ENCODE measurements at regions of chr9 and their contacts with region 1.

Region 1: DNA sequence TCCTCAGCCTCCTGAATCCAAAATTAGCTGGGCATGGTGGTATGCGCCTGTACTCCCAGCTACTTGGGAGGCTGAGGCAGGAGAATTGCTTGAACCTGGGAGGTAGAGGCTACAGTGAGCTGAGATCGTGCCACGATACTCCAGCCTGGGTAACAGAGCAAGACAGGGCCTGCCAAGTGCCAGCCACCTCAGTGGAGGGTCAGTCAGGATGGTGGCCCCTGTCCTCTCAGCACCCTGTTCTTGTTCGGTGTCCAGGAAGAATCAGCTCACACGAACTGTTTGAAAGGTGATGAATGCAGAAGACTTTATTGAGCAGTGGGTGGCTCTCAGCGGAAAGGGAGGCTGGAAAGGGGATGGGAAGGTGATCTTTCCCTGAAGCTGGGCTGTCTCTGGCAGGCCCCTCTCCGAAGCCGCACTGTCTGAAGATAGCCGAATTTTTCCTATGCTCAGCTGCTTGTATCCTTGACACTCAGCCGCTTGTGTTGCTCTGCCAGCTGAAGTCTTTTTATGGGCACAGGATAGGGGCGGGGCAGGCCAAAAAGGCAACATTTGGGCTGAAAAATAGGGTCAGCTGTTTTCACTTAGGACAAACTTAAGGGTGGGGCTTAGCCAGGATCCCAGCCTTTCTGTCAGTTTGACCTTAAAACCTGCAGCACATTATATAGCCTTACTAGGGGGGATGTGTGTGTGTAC is 50.9 kb downstream of the UBE2R2 start:
- DNase-seq: no peak
- ATAC-seq: peak; percentile 42
- H3K4me3 ChIP-seq: no peak overlapping the region
- H3K27ac ChIP-seq: no peak overlapping the region
- H3K4me1 ChIP-seq: peaks cover 12% of the 10 kb centered on the region
- H3K27me3 ChIP-seq: no peaks in the 10 kb centered on the region
- CTCF ChIP-seq: no peak

Region 2: GRCh38 chr9:33884856-33885701 is 17.2 kb after region 1 on chr9:
- CTCF ChIA-PET with region 1: interaction called, 10 read pairs
- POLR2A ChIA-PET with region 1: no interaction called
- in situ Hi-C with region 1: no loop called
- intact Hi-C with region 1: no loop called
- DNase-seq: no peak
- ATAC-seq: no peak; the same call in 1 of the 2 replicates
- H3K4me3 ChIP-seq: no peak overlapping the region
- H3K27ac ChIP-seq: no peak overlapping the region
- H3K4me1 ChIP-seq: peaks cover 22% of the 10 kb centered on the region
- H3K27me3 ChIP-seq: no peaks in the 10 kb centered on the region
- CTCF ChIP-seq: no peak

Region 3: GRCh38 chr9:33924978-33925797 is 57.3 kb after region 1 on chr9:
- CTCF ChIA-PET with region 1: no interaction called
- POLR2A ChIA-PET with region 1: no interaction called
- in situ Hi-C with region 1: no loop called
- intact Hi-C with region 1: loop called (anchors 10 kb)
- DNase-seq: no peak
- ATAC-seq: peak; percentile 55
- H3K4me3 ChIP-seq: no peak overlapping the region
- H3K27ac ChIP-seq: peak overlapping the region; percentile 23; the same call in 1 of the 2 replicates
- H3K4me1 ChIP-seq: peaks cover 7% of the 10 kb centered on the region; the same call in 1 of the 2 replicates
- H3K27me3 ChIP-seq: no peaks in the 10 kb centered on the region
- CTCF ChIP-seq: no peak